PC-9 (cell line): ENCODE measurements at regions of chr3 and their contacts with region 1.

Region 1: DNA sequence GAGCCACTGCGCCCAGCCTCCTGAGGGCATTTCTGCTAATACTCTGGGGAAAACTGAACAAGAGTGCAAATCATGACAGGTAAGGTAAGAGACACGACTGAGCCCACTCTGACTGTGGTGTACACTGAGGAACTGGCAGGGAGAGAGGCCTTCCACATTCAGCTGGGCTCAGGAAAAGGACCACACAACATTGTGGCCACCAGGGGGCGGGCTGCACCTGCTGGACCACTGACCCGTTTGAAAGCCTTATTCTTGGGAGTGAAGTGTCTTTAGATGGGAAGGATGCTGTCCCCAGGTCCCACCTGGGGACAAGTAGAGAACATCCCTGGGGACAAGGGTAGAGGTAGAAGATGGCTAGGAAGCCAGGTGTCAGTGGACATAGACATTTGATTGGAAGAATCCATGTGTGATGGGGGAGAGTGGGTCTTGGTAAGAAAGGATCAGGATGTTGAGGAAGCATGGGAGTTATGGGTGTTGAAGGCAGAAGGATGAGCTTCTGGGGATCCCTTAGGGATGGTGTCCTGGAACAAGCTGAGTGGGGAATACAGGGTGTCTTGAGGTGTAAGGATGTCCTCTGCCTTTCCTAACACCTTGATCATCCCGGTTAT is 6.2 kb upstream of the CTDSPL start:
- DNase-seq: peak; percentile 61 to 76
- H3K4me3 ChIP-seq: no peak overlapping the region
- H3K27ac ChIP-seq: no peak overlapping the region
- H3K4me1 ChIP-seq: peaks cover 16% of the 10 kb centered on the region
- H3K27me3 ChIP-seq: no peaks in the 10 kb centered on the region
- CTCF ChIP-seq: peak; percentile 91

Region 2: GRCh38 chr3:37967260-37967881 is 111.9 kb after region 1 on chr3:
- CTCF ChIA-PET with region 1: interaction called, 14 read pairs
- POLR2A ChIA-PET with region 1: interaction called, 8 read pairs
- intact Hi-C with region 1: loop called (anchors 1 kb)
- DNase-seq: peak in 1 of 2 experiments; percentile 55
- H3K4me3 ChIP-seq: no peak overlapping the region
- H3K27ac ChIP-seq: no peak overlapping the region
- H3K4me1 ChIP-seq: no peaks in the 10 kb centered on the region
- H3K27me3 ChIP-seq: no peaks in the 10 kb centered on the region
- CTCF ChIP-seq: peak; percentile 76

Region 3: DNA sequence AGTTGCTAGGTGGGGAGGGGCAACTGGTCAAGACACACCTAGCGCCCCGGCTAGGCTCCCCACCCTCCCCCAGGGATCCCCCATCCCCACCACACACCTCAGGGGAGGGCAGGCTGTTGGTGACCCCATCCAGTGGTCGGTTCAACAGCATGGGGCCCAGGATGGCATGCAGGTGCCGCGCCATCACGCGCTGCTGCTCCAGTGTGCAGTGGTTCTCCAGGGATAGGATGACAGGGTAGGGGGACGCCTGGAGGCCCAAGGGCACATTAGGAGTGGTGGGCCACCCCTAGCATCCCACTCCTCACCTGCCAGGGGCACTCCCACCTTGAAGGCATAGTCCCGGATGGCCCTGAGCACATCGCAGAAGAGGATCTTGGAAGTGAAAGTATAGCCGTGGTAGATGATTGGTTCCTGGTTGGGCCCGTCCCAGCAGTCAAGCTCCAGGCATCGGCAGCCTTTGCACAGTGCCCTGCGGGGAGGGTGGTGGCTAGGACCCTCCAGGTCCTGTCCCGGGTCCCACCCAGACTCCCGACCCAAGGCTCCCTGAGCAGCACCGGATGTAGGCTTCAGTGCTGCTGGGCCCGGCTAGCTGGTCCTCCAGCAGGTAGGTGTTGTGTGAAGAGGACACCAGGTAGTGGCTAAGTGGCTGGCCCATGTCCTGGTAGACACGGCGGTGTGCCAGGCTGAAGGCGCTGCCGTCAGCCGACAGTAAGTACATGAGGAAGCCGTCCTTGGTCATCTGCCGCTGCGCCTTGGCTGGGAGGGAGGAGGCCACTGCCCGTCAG is 154.5 kb after region 1 on chr3:
- CTCF ChIA-PET with region 1: no interaction called
- POLR2A ChIA-PET with region 1: no interaction called
- intact Hi-C with region 1: no loop called
- DNase-seq: no peak
- H3K4me3 ChIP-seq: no peak overlapping the region
- H3K27ac ChIP-seq: no peak overlapping the region
- H3K4me1 ChIP-seq: no peaks in the 10 kb centered on the region
- H3K27me3 ChIP-seq: no peaks in the 10 kb centered on the region
- CTCF ChIP-seq: no peak

Region 4: GRCh38 chr3:38281895-38282675 is 426.6 kb after region 1 on chr3 and contains the start of gene SLC22A14:
- CTCF ChIA-PET with region 1: no interaction called
- POLR2A ChIA-PET with region 1: no interaction called
- intact Hi-C with region 1: no loop called
- DNase-seq: no peak
- H3K4me3 ChIP-seq: no peak within 1 kb of the TSS
- H3K27ac ChIP-seq: no peak within 1 kb of the TSS
- H3K4me1 ChIP-seq: no peaks in the 10 kb centered on the region
- H3K27me3 ChIP-seq: no peaks in the 10 kb centered on the region
- CTCF ChIP-seq: no peak
- total RNA-seq, gene SLC22A14: not detected in 2 replicates